ENCODE measurements at regions of chr13 and their contacts with region 1.

Region 1: GRCh38 chr13:107211073-107211472 is 643.1 kb upstream of the ARGLU1 start:
- DNase-seq: peak; percentile 72
- ATAC-seq: peak; percentile 93

Region 2: DNA sequence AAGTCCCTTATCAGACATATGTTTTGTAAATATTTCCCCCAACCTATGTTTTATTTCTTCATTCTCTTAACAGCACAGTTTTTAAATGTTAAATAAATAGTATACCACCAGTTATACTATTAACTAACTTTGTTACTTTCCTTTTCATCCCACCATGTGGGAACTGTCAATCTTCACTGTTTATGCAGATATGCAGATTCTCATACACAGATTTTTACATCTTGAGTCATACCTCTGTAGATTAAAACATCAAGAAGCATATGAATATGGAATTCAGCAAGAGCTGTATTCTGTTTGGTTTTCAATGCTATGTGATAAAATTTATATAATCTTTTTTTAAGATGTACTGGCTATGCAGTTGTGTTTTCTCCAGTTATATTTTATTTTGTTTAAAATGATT is 438.0 kb after region 1 on chr13:
- intact Hi-C with region 1: loop called (anchors 5 kb)
- DNase-seq: no peak
- ATAC-seq: no peak

Region 3: DNA sequence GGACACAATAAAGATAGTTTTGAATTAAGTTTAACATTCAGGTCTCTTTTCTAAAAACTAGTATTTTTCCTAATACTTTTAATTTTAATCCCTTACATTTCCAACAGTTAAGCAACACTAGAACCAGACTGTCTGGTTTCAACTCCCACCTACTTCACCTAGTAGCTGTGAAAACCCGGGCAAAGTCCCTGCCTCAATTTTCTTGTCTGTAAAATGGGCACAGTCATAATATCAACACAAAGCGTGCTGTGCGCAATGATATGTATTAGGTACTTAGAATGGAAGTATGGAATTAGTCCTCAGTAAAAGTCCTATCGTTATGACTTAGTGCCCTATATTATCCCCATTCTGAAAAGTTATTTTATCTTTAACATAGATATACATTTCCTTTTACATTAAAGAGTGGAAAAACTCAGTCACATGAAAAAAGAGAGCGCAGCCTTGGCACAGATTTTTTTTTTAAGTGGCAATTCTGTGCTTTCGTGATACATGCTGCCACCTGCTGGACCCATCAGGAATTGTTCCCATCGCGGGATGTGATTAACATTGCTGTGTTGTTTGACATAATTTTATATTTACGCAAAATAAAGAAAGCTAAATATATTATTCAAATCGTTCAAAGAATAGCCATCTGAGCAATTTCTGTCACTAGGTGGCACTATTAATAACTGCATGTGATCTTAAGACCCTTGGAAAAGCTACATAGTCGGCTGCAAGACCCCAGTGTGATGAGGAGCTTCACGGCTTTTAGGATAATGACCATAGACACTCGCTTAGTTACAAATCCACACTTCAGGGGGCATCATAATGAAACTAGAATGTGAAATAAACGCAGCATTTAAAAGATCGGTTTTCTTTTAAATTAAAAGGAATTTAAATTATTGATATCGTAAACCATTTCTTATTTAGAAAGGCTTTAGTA is 944.4 kb after region 1 on chr13:
- intact Hi-C with region 1: loop called (anchors 5 kb)
- DNase-seq: peak; percentile 56
- ATAC-seq: no peak